Activated CD4-positive, alpha-beta T cell treated with anti-CD3 and anti-CD28 coated beads for 36 hours (primary cell): ENCODE measurements at regions of chr14 and their contacts with region 1.

Region 1: DNA sequence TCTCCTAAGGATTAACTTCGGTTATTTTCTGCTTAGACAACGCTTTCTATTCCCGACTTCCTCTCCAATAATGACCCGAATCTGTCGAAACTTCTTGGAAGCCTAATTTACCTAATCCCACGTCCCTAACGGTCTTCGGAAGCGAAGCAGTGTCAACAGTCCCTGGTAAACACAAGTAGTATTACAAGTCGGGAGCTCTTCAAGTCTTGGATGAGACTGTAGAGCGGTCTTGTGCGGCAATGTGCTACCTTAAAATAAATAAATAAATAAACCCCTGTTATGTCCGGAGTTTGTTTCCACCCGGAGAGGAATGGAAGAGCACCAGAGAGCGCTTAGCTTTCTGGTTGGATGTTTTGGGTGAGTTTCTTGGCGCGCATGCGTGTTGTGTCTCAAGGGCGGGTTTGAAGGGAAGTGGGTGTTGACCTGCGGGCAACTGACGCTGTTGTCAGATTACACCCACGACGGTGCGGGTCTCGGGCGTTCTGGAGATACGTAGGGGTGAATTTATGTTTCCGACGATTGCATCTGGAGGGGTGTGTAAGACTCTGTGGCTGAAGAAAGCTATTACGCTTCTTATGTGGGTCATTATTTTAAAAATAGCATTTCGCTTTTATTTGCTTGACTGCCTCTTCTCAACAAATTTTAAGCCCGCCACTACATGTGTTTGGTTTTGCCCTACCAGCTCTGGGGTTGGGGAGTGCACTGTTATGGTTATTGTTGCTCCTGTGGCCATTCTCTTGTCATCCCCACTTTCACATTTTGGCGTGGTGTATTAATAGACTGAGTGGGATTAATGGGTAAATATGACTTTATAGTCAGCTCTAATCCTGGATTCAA is at the starts of genes KIAA0586 and TIMM9:
- DNase-seq: peak; percentile 98
- ATAC-seq: peak; percentile 77
- H3K4me3 Mint-ChIP-seq: peak within 1 kb of the TSS; percentile 97
- H3K27ac Mint-ChIP-seq: peak within 1 kb of the TSS; percentile 99
- H3K4me1 Mint-ChIP-seq: peaks cover 45% of the 10 kb centered on the region
- H3K27me3 Mint-ChIP-seq: no peaks in the 10 kb centered on the region
- total RNA-seq, gene KIAA0586: 32.0 to 38.4 TPM
- total RNA-seq, gene TIMM9: 72.6 to 109 TPM

Region 2: DNA sequence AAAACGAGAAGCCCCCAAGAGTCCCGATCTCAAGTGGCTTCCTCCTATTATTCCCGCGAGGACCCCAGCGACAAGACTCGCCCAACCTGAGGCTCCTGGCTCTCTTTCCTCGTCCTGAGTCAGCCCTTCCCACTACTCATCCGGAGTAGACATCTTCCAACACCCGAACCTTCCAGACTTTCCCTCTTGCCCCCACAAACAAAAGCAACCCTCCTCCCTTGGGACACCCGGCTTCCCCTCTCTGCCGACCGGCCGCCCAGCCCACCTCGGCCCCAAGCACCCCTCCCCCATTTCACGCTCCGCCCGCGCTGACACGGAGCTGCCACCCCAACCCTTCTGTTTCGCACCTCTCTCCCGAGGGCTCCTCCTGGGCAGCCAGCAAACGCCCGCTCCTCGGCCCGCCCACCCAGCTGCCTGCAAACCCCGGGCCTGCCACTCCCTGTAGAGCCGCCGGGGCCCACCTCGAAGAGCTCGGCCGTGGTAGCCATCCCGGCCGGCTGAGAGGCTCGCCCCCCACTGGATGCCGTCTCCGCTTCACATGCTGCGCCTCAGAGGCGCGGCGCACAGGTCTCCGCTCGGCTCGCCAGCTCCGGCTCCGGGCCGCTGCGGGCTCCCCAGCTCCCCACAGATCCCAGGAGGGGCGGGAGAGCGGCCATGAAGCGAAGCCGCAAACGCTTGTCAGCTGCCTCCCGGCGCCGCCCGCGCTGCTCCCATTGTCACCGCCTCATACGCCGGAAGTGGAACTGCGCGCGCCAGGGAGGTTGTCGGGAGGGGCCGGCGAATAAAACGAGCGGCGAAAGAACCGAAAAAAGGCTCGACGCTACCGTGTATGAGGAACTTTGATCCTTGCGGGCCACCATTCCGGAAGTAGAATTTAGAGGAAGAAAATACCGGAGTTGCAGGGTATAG is 1159.1 kb before region 1 on chr14 and contains the starts of genes AP5M1 and EXOC5:
- CTCF ChIA-PET with region 1: no interaction called
- POLR2A ChIA-PET with region 1: interaction called, 3 read pairs
- intact Hi-C with region 1: loop called in 1 of 2 experiments (anchors 2 kb)
- DNase-seq: peak; percentile 96
- ATAC-seq: peak; percentile 93
- H3K4me3 Mint-ChIP-seq: peak within 1 kb of the TSS; percentile 90
- H3K27ac Mint-ChIP-seq: peak within 1 kb of the TSS; percentile 99
- H3K4me1 Mint-ChIP-seq: peaks cover 53% of the 10 kb centered on the region
- H3K27me3 Mint-ChIP-seq: no peaks in the 10 kb centered on the region
- total RNA-seq, gene AP5M1: 30.8 to 32.7 TPM
- total RNA-seq, gene EXOC5: 66.5 to 80.2 TPM

Region 3: GRCh38 chr14:58244556-58245387 is 182.7 kb before region 1 on chr14 and contains the start of gene PSMA3:
- CTCF ChIA-PET with region 1: interaction called, 3 read pairs
- POLR2A ChIA-PET with region 1: interaction called, 5 read pairs
- intact Hi-C with region 1: loop called (anchors 1 kb)
- DNase-seq: peak; percentile 98
- ATAC-seq: peak; percentile 93
- H3K4me3 Mint-ChIP-seq: peak within 1 kb of the TSS; percentile 96
- H3K27ac Mint-ChIP-seq: peak within 1 kb of the TSS; percentile 96
- H3K4me1 Mint-ChIP-seq: peaks cover 40% of the 10 kb centered on the region
- H3K27me3 Mint-ChIP-seq: no peaks in the 10 kb centered on the region
- total RNA-seq, gene PSMA3: 342 to 425 TPM

Region 4: GRCh38 chr14:58331111-58331510 is 96.4 kb before region 1 on chr14:
- CTCF ChIA-PET with region 1: no interaction called
- POLR2A ChIA-PET with region 1: no interaction called
- intact Hi-C with region 1: loop called (anchors 1 kb)
- DNase-seq: peak; percentile 91
- ATAC-seq: peak; percentile 98
- H3K4me3 Mint-ChIP-seq: peak overlapping the region; percentile 71
- H3K27ac Mint-ChIP-seq: peak overlapping the region; percentile 87
- H3K4me1 Mint-ChIP-seq: peaks cover 16% of the 10 kb centered on the region
- H3K27me3 Mint-ChIP-seq: no peaks in the 10 kb centered on the region

Region 5: GRCh38 chr14:58533446-58533845 is 105.9 kb after region 1 on chr14:
- CTCF ChIA-PET with region 1: no interaction called
- POLR2A ChIA-PET with region 1: no interaction called
- intact Hi-C with region 1: no loop called
- DNase-seq: no peak
- ATAC-seq: no peak
- H3K4me3 Mint-ChIP-seq: no peak overlapping the region
- H3K27ac Mint-ChIP-seq: no peak overlapping the region
- H3K4me1 Mint-ChIP-seq: no peaks in the 10 kb centered on the region
- H3K27me3 Mint-ChIP-seq: no peaks in the 10 kb centered on the region

Region 6: GRCh38 chr14:58571769-58572472 is 144.4 kb after region 1 on chr14:
- CTCF ChIA-PET with region 1: no interaction called
- POLR2A ChIA-PET with region 1: interaction called, 4 read pairs
- intact Hi-C with region 1: loop called (anchors 1 to 2 kb)
- DNase-seq: peak; percentile 83
- ATAC-seq: peak; percentile 90
- H3K4me3 Mint-ChIP-seq: peak overlapping the region; percentile 45
- H3K27ac Mint-ChIP-seq: peak overlapping the region; percentile 93
- H3K4me1 Mint-ChIP-seq: peaks cover 44% of the 10 kb centered on the region
- H3K27me3 Mint-ChIP-seq: no peaks in the 10 kb centered on the region

Region 7: DNA sequence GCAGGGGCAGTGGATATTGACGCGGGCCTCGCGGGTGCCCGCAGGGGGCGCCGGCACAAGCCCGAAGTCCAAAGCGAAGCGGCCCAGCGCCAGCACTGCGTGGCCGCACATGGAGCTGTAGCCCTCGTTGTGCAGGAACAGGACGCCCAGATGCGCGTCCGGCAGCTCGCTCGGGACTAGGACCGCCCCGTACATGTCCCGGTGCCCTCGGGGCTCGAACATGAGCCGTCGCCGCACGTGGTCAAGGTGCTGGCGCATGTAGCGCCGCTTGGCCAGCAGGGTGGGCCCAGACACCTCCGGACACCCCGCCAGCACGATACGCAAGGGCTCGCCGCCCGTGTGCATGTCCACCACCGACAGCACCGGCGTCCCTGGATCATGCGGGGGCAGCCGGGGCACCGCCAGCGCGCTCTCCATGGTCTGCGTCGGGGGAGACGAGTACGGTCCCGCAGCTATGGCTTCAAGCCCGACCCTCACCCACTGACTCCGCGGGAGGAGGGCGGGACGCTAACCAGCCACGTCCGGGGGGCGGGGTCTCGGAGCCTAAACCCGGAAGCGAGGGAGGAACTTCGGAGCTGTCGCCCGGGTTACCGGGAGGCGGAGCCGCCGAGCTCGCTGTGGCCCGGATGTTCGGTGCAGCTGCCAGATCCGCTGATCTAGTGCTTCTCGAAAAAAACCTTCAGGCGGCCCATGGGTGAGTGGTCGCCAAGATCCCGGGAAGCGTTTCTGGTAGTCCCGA is 1056.6 kb after region 1 on chr14 and contains the starts of genes JKAMP and L3HYPDH:
- CTCF ChIA-PET with region 1: no interaction called
- POLR2A ChIA-PET with region 1: interaction called, 3 read pairs
- intact Hi-C with region 1: loop called in 1 of 2 experiments (anchors 5 kb)
- DNase-seq: peak; percentile 99
- ATAC-seq: peak; percentile 97
- H3K4me3 Mint-ChIP-seq: peak within 1 kb of the TSS; percentile 92
- H3K27ac Mint-ChIP-seq: peak within 1 kb of the TSS; percentile 89
- H3K4me1 Mint-ChIP-seq: peaks cover 57% of the 10 kb centered on the region
- H3K27me3 Mint-ChIP-seq: no peaks in the 10 kb centered on the region
- total RNA-seq, gene JKAMP: 18.0 to 20.2 TPM
- total RNA-seq, gene L3HYPDH: 9.3 to 11.8 TPM